AG04449 (cell line): ENCODE measurements at regions of chr2 and their contacts with region 1.

Region 1: DNA sequence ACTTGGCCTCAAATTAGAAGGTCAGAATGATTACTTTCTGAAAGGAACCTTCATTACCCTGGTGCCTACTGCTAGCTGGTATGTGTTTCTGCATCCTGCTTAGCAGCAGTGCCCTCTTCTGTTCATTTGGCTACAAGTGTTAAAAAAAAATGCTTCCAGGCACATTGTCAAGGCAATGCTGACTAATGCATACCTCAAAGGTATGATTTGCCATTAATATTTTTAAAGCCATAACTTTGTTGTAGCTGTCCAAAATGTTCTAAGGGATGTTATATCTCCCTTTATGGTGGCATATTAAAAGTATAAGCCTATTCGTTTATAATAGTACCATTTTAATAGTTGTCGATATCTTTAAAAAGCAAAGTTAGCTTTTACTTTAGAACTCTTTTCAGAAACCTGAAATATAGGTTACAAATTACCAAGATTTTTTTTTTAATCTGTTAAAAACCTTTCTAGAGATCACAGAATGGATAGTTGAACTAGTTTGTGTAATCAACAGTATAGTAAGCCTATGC is 52.0 kb upstream of the FAM171B start:
- DNase-seq: peak; percentile 40
- H3K4me3 ChIP-seq: no peak overlapping the region
- CTCF ChIP-seq: peak; percentile 58

Region 2: DNA sequence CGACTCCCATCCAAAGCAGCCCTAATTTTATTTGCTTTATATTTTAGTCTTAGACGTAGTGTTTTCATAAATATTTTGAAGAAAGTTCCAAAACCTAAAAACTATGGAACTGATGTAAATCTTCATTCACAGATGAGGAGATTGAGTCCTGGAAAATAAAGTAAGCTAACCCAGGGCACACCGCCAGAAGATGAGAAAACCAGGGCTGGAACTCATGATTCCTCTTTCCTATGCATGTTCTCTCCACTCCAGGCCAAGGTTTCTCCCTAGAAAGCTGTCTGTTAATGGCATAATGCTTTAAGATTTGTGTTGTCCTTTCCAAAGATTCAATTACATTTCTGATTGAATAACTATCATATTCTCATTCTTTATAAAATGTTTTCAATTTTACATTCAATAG is 234.3 kb before region 1 on chr2:
- CTCF ChIA-PET with region 1: no interaction called
- POLR2A ChIA-PET with region 1: no interaction called
- DNase-seq: no peak
- H3K4me3 ChIP-seq: no peak overlapping the region
- CTCF ChIP-seq: no peak

Region 3: GRCh38 chr2:186496401-186496800 is 145.5 kb before region 1 on chr2:
- CTCF ChIA-PET with region 1: interaction called, 347 read pairs
- POLR2A ChIA-PET with region 1: no interaction called
- DNase-seq: no peak
- H3K4me3 ChIP-seq: no peak overlapping the region
- CTCF ChIP-seq: no peak

Region 4: GRCh38 chr2:186518945-186519344 is 122.9 kb before region 1 on chr2:
- CTCF ChIA-PET with region 1: interaction called, 27 read pairs
- POLR2A ChIA-PET with region 1: no interaction called
- DNase-seq: no peak
- H3K4me3 ChIP-seq: no peak overlapping the region
- CTCF ChIP-seq: no peak

Region 5: GRCh38 chr2:186544255-186544675 is 97.6 kb before region 1 on chr2:
- CTCF ChIA-PET with region 1: interaction called, 11 read pairs
- POLR2A ChIA-PET with region 1: no interaction called
- DNase-seq: no peak
- H3K4me3 ChIP-seq: no peak overlapping the region
- CTCF ChIP-seq: no peak

Region 6: GRCh38 chr2:186887107-186888090 is 245.5 kb after region 1 on chr2:
- CTCF ChIA-PET with region 1: no interaction called
- POLR2A ChIA-PET with region 1: no interaction called
- DNase-seq: no peak
- H3K4me3 ChIP-seq: no peak overlapping the region
- CTCF ChIP-seq: no peak